Common myeloid progenitor, CD34-positive (primary cell): ENCODE measurements at regions of chr3 and their contacts with region 1.

Region 1: DNA sequence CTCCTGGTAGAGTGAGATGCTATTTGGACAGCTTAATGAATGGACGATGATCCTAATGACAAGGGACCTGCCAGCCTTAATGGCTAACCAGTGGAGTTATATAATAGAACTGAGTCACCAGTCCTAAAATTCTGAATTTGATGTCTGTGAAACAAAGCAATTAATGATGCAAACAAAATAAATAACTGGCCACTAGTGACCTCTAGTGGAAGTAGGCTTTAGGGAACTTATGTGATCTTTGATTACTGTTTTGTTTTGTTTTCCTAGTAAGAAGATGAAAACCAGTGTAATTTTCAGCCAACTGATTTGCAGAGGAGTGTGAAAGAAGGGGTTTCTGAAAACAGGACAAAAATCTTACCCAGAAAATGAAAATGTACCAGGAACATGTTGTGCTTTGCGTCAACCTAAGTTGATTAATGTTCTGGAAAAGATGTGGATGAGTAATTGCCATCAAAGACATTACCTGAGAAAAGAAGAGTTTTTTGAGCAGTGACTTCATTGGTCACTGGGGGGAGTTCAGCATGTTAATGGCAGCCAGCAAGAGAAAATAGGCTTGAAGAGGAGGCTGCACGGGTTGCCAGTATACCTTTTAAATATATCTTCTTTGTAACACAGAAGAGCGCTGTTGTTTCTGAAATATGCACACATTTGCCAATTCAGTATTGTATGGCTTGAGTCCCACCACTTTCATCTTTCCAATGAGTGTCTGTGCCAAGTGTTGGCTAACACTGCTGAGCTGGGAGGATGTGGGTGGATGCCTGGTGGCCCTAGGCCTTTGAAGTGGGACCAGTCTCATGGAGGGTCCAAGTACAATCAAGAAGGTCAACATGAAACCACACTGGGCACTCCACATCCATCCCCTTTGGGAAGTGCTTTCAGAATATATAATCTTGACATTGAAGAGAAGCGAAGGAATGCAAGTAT is 9.3 kb downstream of the VEPH1 start:
- DNase-seq: peak; percentile 42 to 77 (median 69)
- H3K4me3 ChIP-seq: no peak overlapping the region
- H3K27ac ChIP-seq: no peak overlapping the region
- H3K4me1 ChIP-seq: peaks cover 0 to 9% (median 5%) of the 10 kb centered on the region in 4 experiments
- H3K27me3 ChIP-seq: peaks cover 0 to 3% (median 2%) of the 10 kb centered on the region in 5 experiments

Region 2: DNA sequence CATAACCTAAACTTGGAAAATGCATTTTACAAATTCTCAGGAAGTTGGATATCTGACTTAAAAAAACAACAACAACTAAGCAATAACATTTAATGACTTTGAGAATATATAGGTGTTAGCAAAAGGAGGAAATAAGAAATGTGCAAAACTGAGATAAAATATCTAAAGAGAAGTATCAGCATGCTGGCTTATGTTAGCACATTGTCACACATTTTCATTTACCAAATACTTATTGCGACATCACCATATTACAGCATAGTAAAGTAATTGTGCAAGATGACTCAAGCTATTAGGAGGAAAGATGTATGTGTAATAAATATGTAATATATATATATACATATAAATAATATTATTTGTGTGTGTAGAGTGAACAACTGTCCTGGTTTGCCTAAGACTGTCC is 48.0 kb before region 1 on chr3:
- CTCF ChIA-PET with region 1: no interaction called
- POLR2A ChIA-PET with region 1: no interaction called
- DNase-seq: peak; percentile 40 to 89 (median 79)
- H3K4me3 ChIP-seq: no peak overlapping the region
- H3K27ac ChIP-seq: no peak overlapping the region
- H3K4me1 ChIP-seq: peaks cover 0 to 4% (median under 1%) of the 10 kb centered on the region in 4 experiments
- H3K27me3 ChIP-seq: no peaks in the 10 kb centered on the region

Region 3: GRCh38 chr3:157475921-157476414 is 17.9 kb before region 1 on chr3:
- CTCF ChIA-PET with region 1: interaction called, 10 read pairs
- POLR2A ChIA-PET with region 1: no interaction called
- DNase-seq: no peak
- H3K4me3 ChIP-seq: no peak overlapping the region
- H3K27ac ChIP-seq: no peak overlapping the region
- H3K4me1 ChIP-seq: no peaks in the 10 kb centered on the region
- H3K27me3 ChIP-seq: no peaks in the 10 kb centered on the region

Region 4: GRCh38 chr3:157559401-157559800 is 65.5 kb after region 1 on chr3:
- CTCF ChIA-PET with region 1: no interaction called
- POLR2A ChIA-PET with region 1: no interaction called
- DNase-seq: no peak
- H3K4me3 ChIP-seq: no peak overlapping the region
- H3K27ac ChIP-seq: no peak overlapping the region
- H3K4me1 ChIP-seq: no peaks in the 10 kb centered on the region
- H3K27me3 ChIP-seq: no peaks in the 10 kb centered on the region